CD8-positive, alpha-beta memory T cell (primary cell): ENCODE measurements at regions of chr7 and their contacts with region 1.

Region 1: GRCh38 chr7:111089822-111090426 is 1.0 kb upstream of the LRRN3 start:
- DNase-seq: peak in 1 of 5 donors; percentile 53
- H3K4me3 ChIP-seq: no peak overlapping the region
- H3K4me3 Mint-ChIP-seq: peak overlapping the region in 1 of 7 donors; percentile 74
- H3K27ac ChIP-seq: no peak overlapping the region
- H3K27ac Mint-ChIP-seq: no peak overlapping the region
- H3K4me1 ChIP-seq: peaks cover 16% of the 10 kb centered on the region
- H3K4me1 Mint-ChIP-seq: peaks cover 13 to 49% (median 46%) of the 10 kb centered on the region in 3 donors
- H3K27me3 ChIP-seq: no peaks in the 10 kb centered on the region
- H3K27me3 Mint-ChIP-seq: peaks cover 0 to 1% of the 10 kb centered on the region in 2 donors

Region 2: GRCh38 chr7:110877016-110877415 is 212.9 kb before region 1 on chr7:
- CTCF ChIA-PET with region 1: no interaction called
- POLR2A ChIA-PET with region 1: no interaction called
- DNase-seq: no peak
- H3K4me3 ChIP-seq: no peak overlapping the region
- H3K4me3 Mint-ChIP-seq: no peak overlapping the region
- H3K27ac ChIP-seq: no peak overlapping the region
- H3K27ac Mint-ChIP-seq: no peak overlapping the region
- H3K4me1 ChIP-seq: no peaks in the 10 kb centered on the region
- H3K4me1 Mint-ChIP-seq: peaks cover 0 to 6% (median 0%) of the 10 kb centered on the region in 3 donors
- H3K27me3 ChIP-seq: no peaks in the 10 kb centered on the region
- H3K27me3 Mint-ChIP-seq: no peaks in the 10 kb centered on the region

Region 3: DNA sequence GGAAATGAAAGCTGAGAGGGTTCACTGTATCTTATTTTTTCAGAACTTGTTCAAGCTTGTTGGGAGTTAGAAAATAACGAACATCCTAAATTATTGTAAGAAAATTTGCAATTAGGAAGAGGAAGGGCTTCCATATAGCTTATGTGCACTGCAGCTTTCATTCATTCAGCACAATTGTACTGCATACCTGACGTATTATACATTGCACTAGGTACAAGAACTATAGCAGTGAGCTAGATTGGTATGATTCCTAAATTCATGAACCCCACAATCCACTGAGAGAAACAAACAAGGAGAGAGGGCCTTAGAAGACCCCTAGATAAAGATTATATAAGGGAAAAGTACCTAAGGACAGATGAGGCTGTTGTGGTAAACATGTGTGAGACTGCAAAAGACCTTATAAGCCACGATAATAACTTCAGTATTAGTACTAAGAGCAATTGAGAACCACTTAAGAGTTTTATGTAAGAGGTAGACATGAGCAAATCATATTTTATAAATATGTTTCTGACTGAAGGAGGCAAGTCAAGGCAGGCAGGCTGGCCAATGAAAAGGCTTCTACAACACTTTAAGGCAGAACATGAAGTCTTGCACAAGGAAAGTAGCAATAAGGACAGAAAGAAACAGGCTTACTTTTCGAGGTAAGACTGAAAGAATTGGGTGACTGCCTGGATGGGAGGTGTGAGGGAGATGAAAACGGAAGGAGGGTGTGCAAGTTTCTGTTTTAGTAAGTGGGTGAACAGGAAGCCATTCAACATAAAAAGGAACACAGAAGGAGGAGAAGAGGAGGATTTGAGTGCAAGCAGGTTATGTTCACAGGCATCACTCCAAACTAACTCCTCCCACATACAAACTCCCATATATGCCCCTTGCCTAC is 76.9 kb before region 1 on chr7:
- CTCF ChIA-PET with region 1: interaction called, 3 read pairs
- POLR2A ChIA-PET with region 1: interaction called, 10 read pairs
- DNase-seq: peak in 3 of 5 donors; percentile 41 to 73 (median 47)
- H3K4me3 ChIP-seq: peak overlapping the region; percentile 22
- H3K4me3 Mint-ChIP-seq: peak overlapping the region; percentile 12 to 77 (median 70)
- H3K27ac ChIP-seq: no peak overlapping the region
- H3K27ac Mint-ChIP-seq: peak overlapping the region in 7 of 8 donors; percentile 72 to 94 (median 83)
- H3K4me1 ChIP-seq: peaks cover 71% of the 10 kb centered on the region
- H3K4me1 Mint-ChIP-seq: peaks cover 42 to 70% (median 61%) of the 10 kb centered on the region in 3 donors
- H3K27me3 ChIP-seq: no peaks in the 10 kb centered on the region
- H3K27me3 Mint-ChIP-seq: no peaks in the 10 kb centered on the region

Region 4: GRCh38 chr7:111172564-111173216 is 82.8 kb after region 1 on chr7:
- CTCF ChIA-PET with region 1: no interaction called
- POLR2A ChIA-PET with region 1: no interaction called
- DNase-seq: no peak
- H3K4me3 ChIP-seq: no peak overlapping the region
- H3K4me3 Mint-ChIP-seq: no peak overlapping the region
- H3K27ac ChIP-seq: no peak overlapping the region
- H3K27ac Mint-ChIP-seq: no peak overlapping the region
- H3K4me1 ChIP-seq: no peaks in the 10 kb centered on the region
- H3K4me1 Mint-ChIP-seq: peaks cover 6 to 11% (median 11%) of the 10 kb centered on the region in 3 donors
- H3K27me3 ChIP-seq: no peaks in the 10 kb centered on the region
- H3K27me3 Mint-ChIP-seq: no peaks in the 10 kb centered on the region